Activated CD4-positive, alpha-beta T cell treated with anti-CD3 and anti-CD28 coated beads, Interleukin-2, amount 10 ng/mL, durations not matched to agents 24 days and 14 days (primary cell): ENCODE measurements at regions of chr19 and their contacts with region 1.

Region 1: DNA sequence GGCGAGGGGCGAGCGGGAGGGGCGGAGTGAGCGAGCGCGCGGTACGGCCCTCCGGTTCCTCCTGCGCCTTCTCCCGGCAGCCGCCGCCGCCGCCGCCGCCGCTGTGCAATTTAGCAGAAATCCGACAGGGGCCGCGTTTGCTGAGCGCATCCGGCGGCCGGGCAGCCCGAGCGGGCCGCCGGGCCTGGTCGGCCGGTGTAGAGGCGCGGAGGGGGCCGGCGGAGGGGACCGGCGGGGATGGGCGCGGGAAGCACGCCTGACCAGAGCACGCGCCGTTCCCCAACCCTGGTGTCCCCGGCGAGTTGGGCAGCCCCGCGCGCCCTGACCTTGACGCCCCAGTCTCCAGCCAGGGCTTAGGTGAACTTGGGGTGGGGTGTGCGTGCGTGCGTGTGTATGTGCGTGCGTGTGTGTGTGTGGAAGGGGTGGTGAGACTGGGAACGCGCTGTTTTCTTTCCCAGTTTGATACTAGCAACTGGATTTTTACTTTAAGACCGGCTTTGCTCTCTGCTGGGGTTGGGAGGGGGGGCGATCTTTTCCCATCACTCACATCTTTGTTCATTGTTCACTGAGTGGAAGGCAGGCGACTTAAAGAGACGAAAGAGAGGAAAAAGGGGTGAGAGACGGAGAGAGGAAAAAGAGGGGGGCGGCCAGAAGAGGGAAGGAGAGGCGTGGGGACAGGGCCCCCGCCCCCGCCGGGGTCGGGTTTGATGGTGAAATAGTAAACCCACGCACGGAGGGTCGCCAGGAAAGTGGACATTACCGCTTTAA is 144.3 kb upstream of the ZNF536 start:
- DNase-seq: peak; percentile 89
- H3K4me3 Mint-ChIP-seq: peak overlapping the region; percentile 89
- H3K27ac Mint-ChIP-seq: no peak overlapping the region
- H3K4me1 Mint-ChIP-seq: peaks cover 21% of the 10 kb centered on the region
- H3K27me3 Mint-ChIP-seq: peaks cover 70% of the 10 kb centered on the region

Region 2: DNA sequence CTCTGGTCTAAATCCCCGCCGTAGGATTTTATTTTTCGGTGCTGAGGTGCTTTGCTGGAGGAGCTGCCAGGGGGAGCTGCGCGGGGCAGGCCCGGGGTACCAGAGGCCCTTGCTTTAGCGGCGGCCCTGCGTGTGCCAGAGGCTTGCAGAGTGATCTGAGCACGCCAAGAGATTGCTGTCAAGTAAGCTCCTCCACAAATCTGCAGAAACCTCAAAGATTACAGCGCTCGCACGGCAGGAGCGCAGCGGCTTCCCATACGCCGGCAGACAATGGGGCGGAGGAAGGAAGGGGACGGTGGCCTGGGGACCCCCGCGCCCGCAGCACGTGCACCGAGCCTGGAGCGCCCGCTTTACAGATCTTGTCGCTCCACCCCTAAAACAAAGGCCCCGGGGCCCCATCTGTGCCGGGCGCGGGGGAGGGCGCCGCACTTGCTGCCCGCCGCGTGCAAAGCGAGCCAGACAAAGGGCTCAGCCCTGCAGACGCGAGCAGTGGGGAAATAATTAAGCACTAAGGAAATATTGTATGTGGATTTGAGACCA is 503.7 kb before region 1 on chr19:
- intact Hi-C with region 1: loop called (anchors 10 kb)
- DNase-seq: peak; percentile 71
- H3K4me3 Mint-ChIP-seq: peak overlapping the region; percentile 70
- H3K27ac Mint-ChIP-seq: no peak overlapping the region
- H3K4me1 Mint-ChIP-seq: peaks cover 2% of the 10 kb centered on the region
- H3K27me3 Mint-ChIP-seq: peaks cover 50% of the 10 kb centered on the region

Region 3: DNA sequence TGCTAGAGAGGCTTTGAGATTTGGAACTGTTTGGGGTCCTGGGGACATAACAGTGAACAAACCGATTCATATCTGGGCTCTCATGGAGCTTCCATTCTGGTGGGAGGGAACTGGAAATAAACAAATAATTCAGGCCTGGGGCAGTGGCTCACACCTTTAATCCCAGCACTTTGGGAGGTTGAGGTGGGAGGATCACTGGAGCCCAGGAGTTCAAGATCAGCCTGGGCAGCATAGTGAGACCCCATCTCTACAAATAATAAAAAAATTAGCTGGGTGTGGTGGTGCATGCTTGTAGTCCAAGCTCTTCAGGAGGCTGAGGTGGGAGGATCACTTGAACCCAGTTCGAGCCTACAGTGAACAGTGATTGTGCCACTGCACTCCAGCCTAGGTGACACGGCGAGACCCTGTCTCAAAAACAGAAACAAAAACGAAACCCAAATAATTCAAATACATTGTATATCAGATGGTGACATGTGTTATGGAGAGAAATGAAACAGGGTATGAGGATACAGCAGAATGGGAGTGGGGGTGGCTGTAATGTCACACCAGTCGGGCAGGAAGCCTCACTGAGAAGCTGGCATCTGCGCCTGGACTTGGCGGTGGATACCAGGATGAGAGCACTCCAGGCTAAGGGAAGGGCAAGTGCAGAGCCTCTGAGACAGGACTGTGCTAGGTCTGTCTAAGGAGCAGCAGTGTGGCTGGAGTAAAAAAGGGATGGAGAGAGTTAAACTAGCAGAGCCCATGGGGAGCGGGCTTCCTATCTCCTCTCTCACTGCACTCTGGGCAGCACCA is 13.3 kb after region 1 on chr19:
- intact Hi-C with region 1: no loop called
- DNase-seq: no peak
- H3K4me3 Mint-ChIP-seq: no peak overlapping the region
- H3K27ac Mint-ChIP-seq: no peak overlapping the region
- H3K4me1 Mint-ChIP-seq: no peaks in the 10 kb centered on the region
- H3K27me3 Mint-ChIP-seq: peaks cover 12% of the 10 kb centered on the region

Region 4: GRCh38 chr19:30649934-30650614 is 422.2 kb after region 1 on chr19:
- intact Hi-C with region 1: loop called (anchors 5 kb)
- DNase-seq: peak; percentile 76
- H3K4me3 Mint-ChIP-seq: no peak overlapping the region
- H3K27ac Mint-ChIP-seq: no peak overlapping the region
- H3K4me1 Mint-ChIP-seq: no peaks in the 10 kb centered on the region
- H3K27me3 Mint-ChIP-seq: peaks cover 6% of the 10 kb centered on the region